ENCODE measurements at regions of chr12 and their contacts with region 1.

Region 1: GRCh38 chr12:115623764-115624334 is 653.6 kb downstream of the MED13L start:
- DNase-seq: peak; percentile 77 to 87
- ATAC-seq: peak; percentile 91 to 96 (median 94)
- H3K4me3 ChIP-seq: no peak overlapping the region
- H3K27ac ChIP-seq: peak overlapping the region in 7 of 10 donors; percentile 53 to 74 (median 66)
- H3K4me1 ChIP-seq: peaks cover 0 to 21% (median 5%) of the 10 kb centered on the region in 9 donors
- H3K27me3 ChIP-seq: peaks cover 0 to 9% (median 6%) of the 10 kb centered on the region in 7 donors
- CTCF ChIP-seq: no peak

Region 2: GRCh38 chr12:114668151-114668885 is 955.5 kb before region 1 on chr12:
- intact Hi-C with region 1: loop called in 1 of 10 experiments (anchors 10 kb)
- DNase-seq: peak; percentile 78 to 81
- ATAC-seq: peak; percentile 88 to 94 (median 92)
- H3K4me3 ChIP-seq: peak overlapping the region in 9 of 10 donors; percentile 33 to 54 (median 50)
- H3K27ac ChIP-seq: peak overlapping the region in 6 of 10 donors; percentile 22 to 48 (median 31)
- H3K4me1 ChIP-seq: peaks cover 2 to 43% (median 18%) of the 10 kb centered on the region in 9 donors
- H3K27me3 ChIP-seq: peaks cover 6 to 100% (median 51%) of the 10 kb centered on the region in 7 donors
- CTCF ChIP-seq: peak; percentile 39 to 79 (median 65)

Region 3: DNA sequence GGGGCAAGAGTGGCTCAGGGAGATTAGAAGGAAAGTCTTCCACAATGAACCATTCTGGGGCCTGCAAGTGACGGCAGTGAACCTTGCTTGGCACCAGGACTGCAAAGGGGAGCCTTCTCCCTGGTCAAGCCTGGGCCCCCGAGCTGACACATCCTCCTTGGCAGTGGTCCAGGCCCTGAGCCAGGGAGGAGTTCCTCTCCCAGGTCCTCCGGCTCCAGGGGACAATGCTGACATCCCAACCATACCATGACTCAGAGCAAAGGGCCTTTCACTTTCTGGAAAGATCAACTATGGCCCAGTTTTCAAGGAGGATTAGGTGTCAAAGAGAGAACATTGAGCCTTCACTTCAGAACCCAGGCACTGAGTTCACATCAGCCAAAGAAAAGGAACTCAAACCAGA is 183.4 kb before region 1 on chr12:
- intact Hi-C with region 1: loop called in 2 of 10 experiments (anchors 5 to 10 kb)
- DNase-seq: peak; percentile 64 to 65
- ATAC-seq: peak; percentile 25 to 74 (median 55)
- H3K4me3 ChIP-seq: no peak overlapping the region
- H3K27ac ChIP-seq: peak overlapping the region in 6 of 10 donors; percentile 50 to 78 (median 61)
- H3K4me1 ChIP-seq: peaks cover 0 to 47% (median 8%) of the 10 kb centered on the region in 9 donors
- H3K27me3 ChIP-seq: peaks cover 0 to 5% (median 0%) of the 10 kb centered on the region in 7 donors
- CTCF ChIP-seq: no peak

Region 4: GRCh38 chr12:115451780-115452736 is 171.8 kb before region 1 on chr12:
- intact Hi-C with region 1: loop called in 3 of 10 experiments (anchors 5 to 10 kb)
- DNase-seq: peak; percentile 63 to 67
- ATAC-seq: peak; percentile 66 to 85 (median 74)
- H3K4me3 ChIP-seq: peak overlapping the region in 9 of 10 donors; percentile 24 to 53 (median 39)
- H3K27ac ChIP-seq: peak overlapping the region in 7 of 10 donors; percentile 51 to 81 (median 72)
- H3K4me1 ChIP-seq: peaks cover 0 to 24% (median 4%) of the 10 kb centered on the region in 9 donors
- H3K27me3 ChIP-seq: peaks cover 0 to 29% (median 0%) of the 10 kb centered on the region in 7 donors
- CTCF ChIP-seq: no peak

Region 5: DNA sequence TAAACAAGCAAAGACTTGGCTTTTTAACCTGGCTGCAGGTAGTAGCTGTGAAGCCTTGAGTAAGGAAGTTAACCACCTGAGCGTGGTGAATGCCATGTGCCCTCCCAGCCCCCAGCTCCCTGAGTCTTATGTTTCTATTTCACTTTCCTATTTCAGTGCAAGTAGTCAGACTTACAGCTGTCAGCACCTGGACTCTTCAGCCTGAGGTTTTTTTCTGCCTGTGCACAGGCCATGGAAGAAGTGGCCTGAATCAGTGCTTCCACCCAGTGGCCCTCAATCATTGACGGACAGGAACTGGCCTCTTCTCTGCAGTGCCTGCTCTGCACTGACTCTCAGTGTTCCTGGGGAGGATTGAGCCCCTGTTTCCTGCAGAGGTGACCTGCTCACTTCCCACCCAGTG is 142.7 kb before region 1 on chr12:
- intact Hi-C with region 1: no loop called
- DNase-seq: no peak
- ATAC-seq: no peak
- H3K4me3 ChIP-seq: no peak overlapping the region
- H3K27ac ChIP-seq: no peak overlapping the region
- H3K4me1 ChIP-seq: no peaks in the 10 kb centered on the region
- H3K27me3 ChIP-seq: peaks cover 0 to 5% (median 0%) of the 10 kb centered on the region in 7 donors
- CTCF ChIP-seq: peak in 2 of 9 donors; percentile 12 to 29

Region 6: DNA sequence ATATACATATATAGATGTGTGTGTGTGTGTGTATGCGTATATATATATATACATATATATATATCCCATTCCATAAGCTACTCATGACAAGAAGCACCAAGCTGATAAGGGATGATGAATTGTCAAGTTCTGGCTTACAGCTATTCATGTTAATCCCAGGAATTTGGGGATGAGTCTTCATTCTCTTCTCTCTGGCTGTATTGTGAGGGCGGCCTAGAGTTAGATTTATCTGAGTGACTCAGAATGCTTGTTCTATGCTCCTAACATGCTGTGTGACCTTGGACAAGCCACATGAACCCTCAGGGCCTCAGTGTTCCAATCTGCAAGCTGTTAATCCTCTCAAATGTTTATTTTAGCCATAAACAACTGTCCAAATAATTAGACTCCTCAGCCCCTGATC is 95.4 kb before region 1 on chr12:
- intact Hi-C with region 1: no loop called
- DNase-seq: no peak
- ATAC-seq: no peak
- H3K4me3 ChIP-seq: no peak overlapping the region
- H3K27ac ChIP-seq: no peak overlapping the region
- H3K4me1 ChIP-seq: no peaks in the 10 kb centered on the region
- H3K27me3 ChIP-seq: peaks cover 0 to 3% (median 0%) of the 10 kb centered on the region in 7 donors
- CTCF ChIP-seq: no peak

Region 7: DNA sequence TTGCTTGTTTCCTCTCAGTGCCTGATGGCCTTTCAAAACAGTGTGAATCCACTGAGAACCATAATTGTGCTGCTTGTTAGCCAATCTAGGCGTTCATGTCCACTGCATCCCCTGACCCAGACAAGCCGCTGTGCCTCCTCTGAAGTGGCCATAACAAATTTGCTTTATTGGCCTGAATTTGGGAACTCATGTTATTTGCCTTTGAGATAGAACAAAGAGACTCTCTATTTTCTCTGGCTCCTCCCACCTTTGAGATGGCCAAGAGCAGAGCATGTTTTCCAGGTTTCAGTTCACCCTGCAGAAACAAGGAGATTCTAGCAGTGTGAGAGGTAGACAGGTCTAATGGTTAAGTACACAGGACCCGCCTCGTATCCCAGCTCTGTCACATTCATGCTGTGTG is 70.2 kb before region 1 on chr12:
- intact Hi-C with region 1: no loop called
- DNase-seq: no peak
- ATAC-seq: no peak
- H3K4me3 ChIP-seq: no peak overlapping the region
- H3K27ac ChIP-seq: no peak overlapping the region
- H3K4me1 ChIP-seq: no peaks in the 10 kb centered on the region
- H3K27me3 ChIP-seq: no peaks in the 10 kb centered on the region
- CTCF ChIP-seq: no peak

Region 8: GRCh38 chr12:115598871-115599811 is 24.7 kb before region 1 on chr12:
- intact Hi-C with region 1: loop called in 1 of 10 experiments (anchors 2 kb)
- DNase-seq: peak; percentile 44 to 54
- ATAC-seq: peak; percentile 62 to 88 (median 86)
- H3K4me3 ChIP-seq: peak overlapping the region in 5 of 10 donors; percentile 3 to 29 (median 19)
- H3K27ac ChIP-seq: peak overlapping the region in 8 of 10 donors; percentile 19 to 75 (median 54)
- H3K4me1 ChIP-seq: peaks cover 0 to 25% (median 10%) of the 10 kb centered on the region in 9 donors
- H3K27me3 ChIP-seq: peaks cover 0 to 71% (median 31%) of the 10 kb centered on the region in 7 donors
- CTCF ChIP-seq: no peak

Measured in heart right ventricle (tissue), 16 donors.